Activated CD4-positive, alpha-beta memory T cell treated with anti-CD3 and anti-CD28 coated beads for 36 hours (primary cell): ENCODE measurements at regions of chr10 and their contacts with region 1.

Region 1: GRCh38 chr10:79331709-79332108 is 15.6 kb upstream of the PPIF start:
- DNase-seq: peak; percentile 95
- H3K4me3 Mint-ChIP-seq: peak overlapping the region; percentile 6
- H3K27ac Mint-ChIP-seq: peak overlapping the region; percentile 89
- H3K4me1 Mint-ChIP-seq: peaks cover 41% of the 10 kb centered on the region
- H3K27me3 Mint-ChIP-seq: no peaks in the 10 kb centered on the region

Region 2: DNA sequence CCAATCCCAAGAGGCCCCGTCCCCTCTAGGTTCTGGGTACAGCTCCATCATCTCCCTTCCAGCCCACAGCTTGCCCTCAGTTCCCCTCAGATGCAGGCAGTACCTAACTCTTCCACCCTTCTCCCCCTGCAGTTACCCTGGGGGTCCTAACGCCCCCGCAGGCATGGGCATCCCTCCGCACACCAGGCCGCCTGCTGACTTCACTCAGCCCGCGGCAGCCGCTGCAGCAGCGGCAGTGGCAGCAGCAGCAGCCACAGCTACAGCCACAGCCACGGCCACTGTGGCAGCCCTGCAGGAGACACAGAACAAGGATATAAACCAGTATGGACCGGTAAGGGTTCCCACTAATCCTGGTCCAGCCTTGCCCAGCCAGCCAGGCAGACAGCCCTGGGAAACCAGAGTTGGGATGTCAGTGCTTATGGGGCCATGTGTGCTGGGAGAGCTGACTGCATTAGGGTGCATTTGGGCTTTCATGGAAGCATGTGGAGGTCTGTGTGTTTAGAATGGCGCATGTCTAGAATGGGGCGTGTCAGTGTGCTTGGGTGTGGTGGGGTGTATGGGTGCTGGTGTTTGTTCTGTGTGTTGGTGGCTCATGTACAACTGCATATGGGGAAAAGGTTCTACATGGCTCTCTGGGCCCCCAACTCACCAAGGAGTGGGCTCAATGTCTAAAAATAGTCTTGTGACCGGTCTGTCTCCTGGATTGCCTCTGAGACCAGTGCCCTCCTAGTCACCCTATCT is 39.5 kb before region 1 on chr10:
- CTCF ChIA-PET with region 1: no interaction called
- POLR2A ChIA-PET with region 1: no interaction called
- intact Hi-C with region 1: no loop called
- DNase-seq: no peak
- H3K4me3 Mint-ChIP-seq: no peak overlapping the region
- H3K27ac Mint-ChIP-seq: no peak overlapping the region
- H3K4me1 Mint-ChIP-seq: peaks cover 22% of the 10 kb centered on the region
- H3K27me3 Mint-ChIP-seq: no peaks in the 10 kb centered on the region

Region 3: GRCh38 chr10:79316671-79317431 is 14.9 kb before region 1 on chr10:
- CTCF ChIA-PET with region 1: interaction called, 9 read pairs
- POLR2A ChIA-PET with region 1: interaction called, 22 read pairs
- intact Hi-C with region 1: loop called (anchors 2 kb)
- DNase-seq: peak; percentile 55
- H3K4me3 Mint-ChIP-seq: peak overlapping the region; percentile 53
- H3K27ac Mint-ChIP-seq: peak overlapping the region; percentile 80
- H3K4me1 Mint-ChIP-seq: peaks cover 62% of the 10 kb centered on the region
- H3K27me3 Mint-ChIP-seq: no peaks in the 10 kb centered on the region